ENCODE measurements at regions of chr2 and their contacts with region 1.

Region 1: GRCh38 chr2:134411828-134412638 is 158.2 kb downstream of the MGAT5 start:
- DNase-seq: peak; percentile 75
- CTCF ChIP-seq: peak; percentile 74

Region 2: DNA sequence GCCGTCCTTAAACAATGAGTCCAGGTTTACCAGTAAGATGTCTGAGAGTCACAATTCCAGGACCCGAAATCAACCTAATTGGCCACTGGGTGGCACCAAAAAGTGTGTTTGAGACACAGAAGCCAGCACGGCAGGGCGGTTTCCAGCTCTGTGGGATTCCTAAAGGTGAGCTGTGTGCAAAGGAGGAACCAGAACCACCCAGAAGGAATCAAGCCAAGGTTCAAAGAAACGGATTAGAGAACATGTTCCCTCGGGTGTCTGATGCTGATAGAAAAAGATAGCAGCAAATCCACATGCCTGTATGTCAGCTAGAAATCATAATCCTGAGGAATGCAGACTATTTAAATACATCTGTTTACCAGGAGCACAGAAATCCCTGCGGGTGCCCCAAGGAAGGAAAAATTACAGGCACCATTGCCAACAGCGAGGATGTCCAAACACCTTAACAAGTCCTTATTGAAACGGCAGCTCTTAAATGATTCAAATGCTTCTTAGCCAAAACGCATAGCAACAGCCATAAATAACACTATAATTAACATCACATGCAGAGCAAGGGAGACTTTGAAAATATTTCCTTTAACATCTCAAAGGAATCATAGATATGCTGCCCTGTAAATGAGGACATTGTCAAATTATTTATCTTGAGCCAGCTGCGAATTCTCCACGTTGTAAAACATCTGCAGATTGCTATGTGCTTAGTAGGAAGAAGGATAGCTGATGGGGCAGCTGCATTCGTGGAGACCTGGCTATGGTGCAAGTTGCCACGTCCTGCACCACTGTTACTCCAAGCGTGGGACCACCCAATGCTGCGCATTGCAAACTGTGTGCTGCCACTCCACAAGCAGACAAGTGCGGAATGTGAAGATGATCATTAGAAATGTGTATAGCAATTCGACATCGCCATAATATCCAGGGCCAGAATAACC is 525.0 kb before region 1 on chr2:
- in situ Hi-C with region 1: loop called (anchors 25 kb)
- DNase-seq: peak; percentile 64
- CTCF ChIP-seq: peak; percentile 48

Region 3: GRCh38 chr2:134118279-134119116 is 293.5 kb before region 1 on chr2:
- in situ Hi-C with region 1: loop called (anchors 10 kb)
- DNase-seq: peak; percentile 80
- CTCF ChIP-seq: peak; percentile 70

Region 4: GRCh38 chr2:134245340-134245984 is 166.6 kb before region 1 on chr2:
- in situ Hi-C with region 1: loop called (anchors 25 kb)
- DNase-seq: peak; percentile 54
- CTCF ChIP-seq: peak; percentile 72